ENCODE measurements at regions of chr19 and their contacts with region 1.

Region 1: DNA sequence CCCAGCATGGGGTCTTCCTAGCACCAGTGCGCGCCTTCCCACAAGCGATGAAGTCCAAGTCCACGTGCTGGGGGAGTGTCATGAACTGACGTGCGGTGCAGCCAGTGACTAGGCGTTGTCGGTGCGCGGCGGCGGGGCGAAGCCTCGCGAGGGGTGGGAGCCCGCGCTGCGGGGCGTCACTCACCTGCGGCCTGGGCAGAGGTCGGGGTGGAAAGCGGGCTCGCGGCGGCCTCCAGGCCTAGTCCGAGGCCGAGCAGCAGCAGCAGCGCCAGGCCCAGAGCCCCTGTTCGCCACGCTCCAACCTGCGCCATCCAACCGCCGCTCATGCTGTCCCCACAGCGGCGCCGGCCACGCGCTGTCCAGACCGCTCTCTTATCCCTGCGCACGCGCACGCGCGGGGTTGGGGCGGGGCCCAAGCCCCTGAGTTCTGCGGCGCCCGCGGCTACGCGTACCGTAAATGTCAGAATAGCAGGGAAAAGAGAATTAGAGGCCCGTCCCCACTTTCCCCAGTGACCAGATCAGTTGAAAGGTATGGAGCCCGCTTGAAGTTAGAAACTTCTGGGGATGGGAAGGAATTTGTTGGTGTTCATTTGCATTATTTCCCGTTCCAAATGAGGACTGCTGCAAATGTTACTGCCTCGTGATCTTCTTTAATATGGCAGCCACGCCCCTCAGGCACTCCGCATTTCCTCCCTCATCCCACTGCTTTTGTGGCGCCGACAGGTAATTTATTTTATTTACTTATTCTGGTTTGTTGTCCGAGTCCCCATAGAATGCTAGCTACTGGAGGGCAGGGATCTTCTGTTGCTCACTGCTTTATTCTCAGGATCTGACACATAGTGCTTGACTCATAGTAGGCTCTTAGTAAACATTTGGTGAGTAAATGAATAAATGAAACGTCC is at the start of gene CD320:
- DNase-seq: peak; percentile 76 to 92
- ATAC-seq: peak; percentile 86 to 93 (median 89)
- H3K4me3 ChIP-seq: peak within 1 kb of the TSS; percentile 58
- H3K4me3 Mint-ChIP-seq: peak within 1 kb of the TSS; percentile 86
- H3K27ac ChIP-seq: peak within 1 kb of the TSS; percentile 27
- H3K27ac Mint-ChIP-seq: peak within 1 kb of the TSS; percentile 74 to 85
- H3K4me1 ChIP-seq: peaks cover 47% of the 10 kb centered on the region
- H3K4me1 Mint-ChIP-seq: peaks cover 32 to 41% of the 10 kb centered on the region in 2 donors
- H3K27me3 ChIP-seq: no peaks in the 10 kb centered on the region
- H3K27me3 Mint-ChIP-seq: no peaks in the 10 kb centered on the region
- CTCF ChIP-seq: no peak
- total RNA-seq, gene CD320: 17.0 to 47.1 (median 38.7) TPM

Region 2: DNA sequence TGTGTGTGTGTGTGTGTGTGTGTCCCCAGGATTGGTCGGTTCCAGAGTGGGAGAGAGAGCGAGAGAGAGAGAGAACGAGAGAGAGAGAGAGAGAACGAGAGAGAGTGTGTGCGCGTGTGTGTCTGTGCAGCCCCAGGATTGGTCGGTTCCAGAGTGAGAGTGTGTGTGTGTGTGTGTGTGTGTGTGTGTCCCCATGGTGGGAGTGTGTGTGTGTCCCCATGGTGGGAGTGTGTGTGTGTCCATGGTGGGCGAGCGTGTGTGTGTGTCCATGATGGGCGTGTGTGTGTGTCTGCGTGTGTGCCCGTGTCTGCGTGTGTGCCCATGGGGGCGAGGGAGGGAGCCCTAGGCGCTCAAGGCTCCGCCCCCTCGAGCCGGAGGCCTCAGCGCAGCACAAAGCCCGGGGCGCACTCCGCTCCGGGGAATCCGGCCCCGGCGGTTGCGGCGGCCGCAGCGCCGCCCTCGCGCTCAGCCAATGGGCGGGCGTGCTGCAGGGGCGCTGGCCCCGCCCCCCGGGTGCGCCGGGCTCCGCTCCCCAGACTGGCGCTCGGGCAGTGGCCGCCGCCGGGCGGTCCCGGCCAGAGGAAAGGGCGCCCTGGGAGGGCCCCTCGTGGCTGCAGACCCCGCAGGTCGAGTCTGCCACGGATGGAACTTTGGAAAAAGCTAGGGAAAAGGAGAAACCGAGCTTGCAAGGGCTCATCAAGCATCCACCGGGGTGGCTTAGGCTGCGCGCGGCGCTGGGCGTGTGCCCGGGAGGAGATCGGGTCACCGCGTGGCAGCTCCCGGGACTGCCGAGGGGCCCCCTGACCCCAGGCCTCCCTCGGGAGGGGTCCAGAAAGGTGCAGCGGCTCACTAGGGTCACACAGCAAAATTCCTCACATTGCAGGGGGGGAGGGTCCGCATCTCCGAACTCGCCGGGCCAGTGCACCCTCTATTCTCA is 1110.2 kb before region 1 on chr19:
- intact Hi-C with region 1: loop called (anchors 5 kb)
- DNase-seq: peak; percentile 92 to 97
- ATAC-seq: peak; percentile 83 to 95 (median 89)
- H3K4me3 ChIP-seq: peak overlapping the region; percentile 85
- H3K4me3 Mint-ChIP-seq: peak overlapping the region; percentile 96
- H3K27ac ChIP-seq: peak overlapping the region; percentile 55
- H3K27ac Mint-ChIP-seq: peak overlapping the region; percentile 92 to 96
- H3K4me1 ChIP-seq: peaks cover 33% of the 10 kb centered on the region
- H3K4me1 Mint-ChIP-seq: peaks cover 16 to 28% of the 10 kb centered on the region in 2 donors
- H3K27me3 ChIP-seq: no peaks in the 10 kb centered on the region
- H3K27me3 Mint-ChIP-seq: peaks cover 0 to 3% of the 10 kb centered on the region in 2 donors
- CTCF ChIP-seq: no peak

Region 3: DNA sequence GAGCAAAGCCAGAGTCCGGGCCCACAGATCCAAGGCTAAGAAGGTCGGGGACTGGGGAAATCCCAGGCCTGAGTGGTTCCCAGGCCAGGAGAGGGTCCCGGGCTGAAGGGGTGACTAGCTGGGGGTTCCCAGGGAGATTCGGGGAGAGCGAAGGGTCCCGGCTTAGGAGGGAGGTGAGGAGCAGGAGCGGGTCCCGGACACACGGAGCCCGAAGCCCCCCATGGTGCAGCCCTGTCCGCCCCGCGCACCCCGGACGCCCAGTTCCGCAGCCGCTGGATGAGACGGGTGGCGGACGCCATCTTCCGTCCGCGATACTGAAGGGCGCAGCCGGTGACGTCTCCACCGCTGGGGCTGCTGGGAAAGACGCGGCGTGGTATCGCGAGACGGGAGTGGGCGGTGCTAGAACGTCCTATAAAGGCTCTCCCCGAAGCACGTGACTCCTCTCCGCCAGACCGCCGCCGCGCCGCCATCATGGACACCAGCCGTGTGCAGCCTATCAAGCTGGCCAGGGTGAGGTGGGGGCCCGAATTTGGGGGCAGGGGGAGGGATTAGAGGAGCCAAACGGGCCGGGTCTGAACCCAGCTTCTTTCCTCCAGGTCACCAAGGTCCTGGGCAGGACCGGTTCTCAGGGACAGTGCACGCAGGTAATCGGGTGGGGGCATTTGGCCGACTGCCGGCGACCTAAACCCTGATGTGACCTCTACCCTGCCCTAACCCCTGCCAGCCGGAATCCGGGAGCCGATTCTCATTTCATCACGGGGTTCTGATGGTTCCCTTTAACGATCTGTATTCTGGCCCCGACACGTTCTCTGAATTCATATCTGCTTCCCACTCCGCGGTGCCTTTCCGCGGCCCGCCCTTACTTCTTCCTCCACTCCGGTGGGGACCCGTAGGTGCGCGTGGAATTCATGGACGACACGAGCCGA is 13.1 kb after region 1 on chr19 and contains the starts of genes NDUFA7 and RPS28:
- intact Hi-C with region 1: loop called (anchors 1 kb)
- DNase-seq: peak; percentile 98 to 99
- ATAC-seq: peak; percentile 95 to 98 (median 97)
- H3K4me3 ChIP-seq: peak within 1 kb of the TSS; percentile 90
- H3K4me3 Mint-ChIP-seq: peak within 1 kb of the TSS; percentile 100
- H3K27ac ChIP-seq: peak within 1 kb of the TSS; percentile 93
- H3K27ac Mint-ChIP-seq: peak within 1 kb of the TSS; percentile 99 to 100
- H3K4me1 ChIP-seq: peaks cover 31% of the 10 kb centered on the region
- H3K4me1 Mint-ChIP-seq: peaks cover 24 to 33% of the 10 kb centered on the region in 2 donors
- H3K27me3 ChIP-seq: no peaks in the 10 kb centered on the region
- H3K27me3 Mint-ChIP-seq: no peaks in the 10 kb centered on the region
- CTCF ChIP-seq: no peak
- total RNA-seq, gene NDUFA7: 19.3 to 28.5 (median 28.4) TPM
- total RNA-seq, gene RPS28: 1,133 to 1,486 (median 1,403) TPM

Region 4: GRCh38 chr19:8342684-8343482 is 34.7 kb after region 1 on chr19 and contains the start of gene KANK3:
- intact Hi-C with region 1: no loop called
- DNase-seq: peak; percentile 90 to 94
- ATAC-seq: peak; percentile 99
- H3K4me3 ChIP-seq: peak within 1 kb of the TSS; percentile 79
- H3K4me3 Mint-ChIP-seq: peak within 1 kb of the TSS; percentile 87
- H3K27ac ChIP-seq: peak within 1 kb of the TSS; percentile 82
- H3K27ac Mint-ChIP-seq: peak within 1 kb of the TSS; percentile 62 to 86
- H3K4me1 ChIP-seq: peaks cover 19% of the 10 kb centered on the region
- H3K4me1 Mint-ChIP-seq: peaks cover 12 to 23% of the 10 kb centered on the region in 2 donors
- H3K27me3 ChIP-seq: no peaks in the 10 kb centered on the region
- H3K27me3 Mint-ChIP-seq: no peaks in the 10 kb centered on the region
- CTCF ChIP-seq: no peak
- total RNA-seq, gene KANK3: 5.7 to 16.9 (median 8.4) TPM